Calu3 (cell line): ENCODE measurements at regions of chr14 and their contacts with region 1.

Region 1: DNA sequence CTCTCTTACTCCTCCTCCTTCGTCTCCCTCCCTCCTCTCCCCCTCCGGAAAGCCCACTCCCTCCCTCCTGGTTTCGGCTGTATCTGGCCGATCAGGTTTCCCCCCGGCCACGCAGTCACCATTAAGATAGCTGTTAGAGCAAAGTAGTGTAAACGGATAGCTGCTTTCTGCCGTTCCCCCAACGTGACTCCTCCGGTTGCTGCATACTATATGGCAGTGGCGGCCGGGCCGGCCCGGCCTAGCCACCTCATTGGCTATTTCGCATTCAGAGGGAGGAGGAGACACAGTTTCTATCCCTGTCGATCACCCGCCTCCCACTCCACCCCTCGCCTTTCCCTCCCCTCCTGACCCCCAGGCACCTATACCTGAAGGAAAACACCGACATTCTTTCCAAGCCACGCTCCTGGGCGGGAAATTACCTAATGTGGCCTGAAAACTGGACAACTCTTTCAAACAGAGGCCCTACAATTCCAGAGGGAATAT is at the start of gene SIX4:
- DNase-seq: peak; percentile 75
- H3K4me3 Mint-ChIP-seq: peak within 1 kb of the TSS; percentile 92
- H3K27ac Mint-ChIP-seq: peak within 1 kb of the TSS; percentile 87
- H3K4me1 Mint-ChIP-seq: peaks cover 11% of the 10 kb centered on the region
- H3K27me3 Mint-ChIP-seq: no peaks in the 10 kb centered on the region
- CTCF ChIP-seq: no peak
- total RNA-seq, gene SIX4: 20.9 and 22.8 TPM in 2 replicates

Region 2: DNA sequence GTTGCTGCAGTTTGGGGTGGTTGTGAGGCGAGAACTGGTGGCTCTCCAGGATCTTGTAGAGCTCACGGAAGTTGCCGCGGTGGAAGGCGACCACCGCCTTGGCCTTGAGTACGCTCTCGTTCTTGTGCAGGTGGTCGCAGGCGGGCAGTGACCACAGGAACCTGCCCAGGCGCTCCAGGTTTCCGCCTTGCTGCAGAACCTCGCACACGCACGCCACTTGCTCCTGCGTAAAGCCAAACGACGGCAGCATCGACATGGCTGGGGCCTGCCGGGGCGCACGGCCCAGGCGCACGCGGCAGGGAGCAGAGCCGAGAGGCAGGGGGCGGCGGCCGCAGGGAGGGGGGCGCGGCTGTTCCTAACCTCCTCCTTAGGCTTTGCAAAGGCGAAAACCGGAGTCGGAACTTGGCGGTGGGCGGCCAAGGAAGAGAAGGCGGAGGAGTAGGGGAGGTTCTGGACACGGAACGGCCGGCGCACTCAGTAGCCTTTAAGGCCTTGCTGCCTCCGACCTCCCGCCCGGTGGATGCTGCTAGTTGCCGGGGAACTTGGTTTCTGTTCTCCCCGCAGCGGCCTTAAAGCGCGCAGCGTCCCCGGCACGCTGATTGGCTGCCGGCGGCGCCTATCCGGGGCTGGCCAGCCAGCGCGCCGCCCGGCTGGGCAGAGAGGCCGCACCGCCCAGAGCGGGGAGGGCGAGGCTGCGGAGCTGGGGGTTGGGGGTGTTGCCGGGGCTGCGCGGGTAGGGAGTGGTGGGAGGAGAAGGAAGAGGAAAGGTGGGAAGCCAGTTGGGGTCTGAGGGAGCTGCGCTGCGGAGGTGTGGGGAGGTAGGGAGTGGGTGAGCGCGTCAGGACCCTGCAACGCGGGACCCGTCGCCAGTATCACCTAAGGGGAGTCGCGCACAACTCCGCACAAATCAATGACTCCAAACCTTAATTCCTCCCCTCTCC is 75.0 kb before region 1 on chr14 and contains the start of gene SIX1:
- CTCF ChIA-PET with region 1: interaction called, 3 read pairs
- intact Hi-C with region 1: loop called (anchors 5 kb)
- DNase-seq: peak; percentile 86
- H3K4me3 Mint-ChIP-seq: peak within 1 kb of the TSS; percentile 75
- H3K27ac Mint-ChIP-seq: peak within 1 kb of the TSS; percentile 6
- H3K4me1 Mint-ChIP-seq: peaks cover 18% of the 10 kb centered on the region
- H3K27me3 Mint-ChIP-seq: peaks cover 49% of the 10 kb centered on the region
- CTCF ChIP-seq: no peak
- total RNA-seq, gene SIX1: 4.6 and 6.7 TPM in 2 replicates

Region 3: GRCh38 chr14:60760653-60761364 is 36.6 kb after region 1 on chr14:
- CTCF ChIA-PET with region 1: interaction called, 4 read pairs
- intact Hi-C with region 1: loop called (anchors 5 kb)
- DNase-seq: peak; percentile 52
- H3K4me3 Mint-ChIP-seq: no peak overlapping the region
- H3K27ac Mint-ChIP-seq: peak overlapping the region; percentile 81
- H3K4me1 Mint-ChIP-seq: peaks cover 49% of the 10 kb centered on the region
- H3K27me3 Mint-ChIP-seq: no peaks in the 10 kb centered on the region
- CTCF ChIP-seq: no peak

Region 4: DNA sequence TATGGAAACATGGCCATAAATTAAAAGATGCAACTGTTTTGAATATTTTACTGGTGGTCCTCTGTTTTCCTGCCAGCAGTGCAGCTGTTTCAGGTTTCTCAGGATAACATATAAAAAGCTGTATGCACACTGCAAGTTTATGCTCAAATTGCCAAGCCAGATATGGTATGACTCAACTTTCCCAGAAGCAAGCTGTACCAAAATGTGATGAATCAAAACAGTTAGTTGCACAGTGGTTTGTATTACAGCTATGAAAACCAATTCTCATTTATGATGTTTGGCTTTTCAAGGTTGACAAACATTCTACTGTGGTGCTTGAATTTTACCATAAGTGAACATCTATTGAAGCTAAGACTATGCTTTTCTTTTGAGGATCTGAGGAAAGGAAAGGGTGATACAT is 241.2 kb after region 1 on chr14:
- CTCF ChIA-PET with region 1: no interaction called
- intact Hi-C with region 1: loop called (anchors 5 kb)
- DNase-seq: no peak
- H3K4me3 Mint-ChIP-seq: no peak overlapping the region
- H3K27ac Mint-ChIP-seq: no peak overlapping the region
- H3K4me1 Mint-ChIP-seq: no peaks in the 10 kb centered on the region
- H3K27me3 Mint-ChIP-seq: no peaks in the 10 kb centered on the region
- CTCF ChIP-seq: no peak

Region 5: GRCh38 chr14:61252369-61253063 is 528.3 kb after region 1 on chr14:
- CTCF ChIA-PET with region 1: no interaction called
- intact Hi-C with region 1: loop called (anchors 5 kb)
- DNase-seq: peak; percentile 77
- H3K4me3 Mint-ChIP-seq: no peak overlapping the region
- H3K27ac Mint-ChIP-seq: no peak overlapping the region
- H3K4me1 Mint-ChIP-seq: peaks cover 7% of the 10 kb centered on the region
- H3K27me3 Mint-ChIP-seq: no peaks in the 10 kb centered on the region
- CTCF ChIP-seq: peak; percentile 50